Ovary (tissue), 10 donors: ENCODE measurements at regions of chr20 and their contacts with region 1.

Region 1: GRCh38 chr20:48657475-48658470 is 170.0 kb downstream of the PREX1 start:
- DNase-seq: peak; percentile 61 to 71 (median 64)
- H3K4me3 ChIP-seq: no peak overlapping the region
- H3K27ac ChIP-seq: no peak overlapping the region
- H3K4me1 ChIP-seq: no peaks in the 10 kb centered on the region
- H3K27me3 ChIP-seq: no peaks in the 10 kb centered on the region
- CTCF ChIP-seq: peak; percentile 70 to 92 (median 88)
- EP300 ChIP-seq: no peak
- POLR2A ChIP-seq: no peak

Region 2: GRCh38 chr20:48828022-48828743 is 170.4 kb after region 1 on chr20:
- intact Hi-C with region 1: no loop called
- DNase-seq: peak; percentile 30 to 68 (median 51)
- H3K4me3 ChIP-seq: peak overlapping the region; percentile 32
- H3K27ac ChIP-seq: no peak overlapping the region
- H3K4me1 ChIP-seq: peaks cover 2% of the 10 kb centered on the region
- H3K27me3 ChIP-seq: no peaks in the 10 kb centered on the region
- CTCF ChIP-seq: peak in 1 of 3 donors; percentile 20
- EP300 ChIP-seq: no peak
- POLR2A ChIP-seq: no peak

Region 3: GRCh38 chr20:48904365-48905296 is 246.9 kb after region 1 on chr20:
- intact Hi-C with region 1: loop called (anchors 2 to 5 kb)
- DNase-seq: peak; percentile 37 to 69 (median 61)
- H3K4me3 ChIP-seq: no peak overlapping the region
- H3K27ac ChIP-seq: no peak overlapping the region
- H3K4me1 ChIP-seq: no peaks in the 10 kb centered on the region
- H3K27me3 ChIP-seq: no peaks in the 10 kb centered on the region
- CTCF ChIP-seq: peak; percentile 46 to 75 (median 73)
- EP300 ChIP-seq: no peak
- POLR2A ChIP-seq: no peak